GM13977 (cell line): ENCODE measurements at regions of chr14 and their contacts with region 1.

Region 1: DNA sequence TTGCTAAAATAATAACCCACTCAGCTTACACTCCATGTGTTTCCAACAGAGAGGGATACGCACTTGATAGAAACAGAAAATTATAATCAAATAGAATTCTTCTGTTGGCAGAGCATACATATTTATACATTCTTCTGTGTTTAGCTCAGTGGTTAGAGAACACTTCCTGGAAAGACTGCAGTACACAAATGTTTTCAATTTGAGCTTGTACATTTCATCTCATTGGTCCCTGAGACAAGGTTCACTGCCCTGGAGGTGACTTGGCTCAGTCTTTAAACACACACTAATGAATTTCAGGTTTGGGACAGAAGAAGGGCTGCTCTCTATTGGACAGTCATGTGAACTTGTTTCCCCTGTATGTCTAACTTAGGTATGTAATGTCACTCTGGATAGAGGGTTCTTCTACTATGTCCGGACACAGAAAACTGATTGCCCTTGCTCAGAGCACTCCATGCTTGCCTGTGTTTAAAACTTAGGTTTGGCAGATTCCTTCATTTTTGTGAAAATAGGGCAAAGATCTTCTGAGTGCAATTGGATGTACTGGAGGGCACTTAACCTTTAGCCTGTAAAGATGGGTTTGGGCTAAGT is 22.9 kb downstream of the PROX2 start:
- DNase-seq: no peak
- CTCF ChIP-seq: no peak

Region 2: GRCh38 chr14:74905375-74906142 is 52.5 kb after region 1 on chr14:
- in situ Hi-C with region 1: loop called (anchors 10 kb)
- DNase-seq: peak; percentile 80
- CTCF ChIP-seq: peak; percentile 95

Region 3: DNA sequence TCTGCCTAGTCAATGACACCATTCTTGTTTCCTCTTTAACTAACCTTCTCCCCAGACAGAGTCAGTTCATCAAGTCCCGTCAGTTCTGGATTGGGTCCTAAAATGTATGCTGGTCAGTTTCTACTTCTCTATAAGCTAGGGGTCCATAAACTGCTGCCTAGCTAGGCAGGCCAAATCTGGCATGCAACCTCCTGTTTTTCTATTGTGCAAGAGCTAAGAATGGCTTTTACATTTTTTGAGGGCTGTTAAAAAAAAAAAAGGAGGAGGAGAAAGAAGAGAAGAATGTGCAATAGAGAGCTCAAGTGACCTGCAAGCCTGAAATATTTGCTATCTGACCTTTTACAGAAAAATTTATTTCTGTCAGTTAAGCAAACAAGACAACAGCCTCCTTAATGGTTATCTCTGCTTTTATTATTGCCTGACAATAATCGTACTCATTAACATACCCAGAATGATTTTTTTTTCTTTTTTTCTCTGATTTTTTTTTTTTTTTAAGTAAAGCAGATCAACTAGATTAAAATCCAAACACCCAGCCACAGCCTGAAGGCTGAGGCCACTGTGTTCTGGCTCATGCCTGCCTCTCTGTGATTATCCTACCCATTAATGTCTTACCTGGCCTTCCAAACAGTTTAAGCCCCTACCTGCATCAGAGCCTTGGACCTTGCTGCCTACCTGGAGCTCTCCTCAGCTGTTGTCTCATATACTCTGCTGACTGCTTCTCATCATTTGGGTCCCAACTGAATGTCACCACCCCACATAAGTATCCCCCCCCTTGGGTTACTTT is 330.0 kb after region 1 on chr14:
- in situ Hi-C with region 1: no loop called
- DNase-seq: no peak
- CTCF ChIP-seq: no peak

Region 4: GRCh38 chr14:75399821-75400678 is 547.0 kb after region 1 on chr14:
- in situ Hi-C with region 1: no loop called
- DNase-seq: no peak
- CTCF ChIP-seq: no peak